CD8-positive, alpha-beta T cell (primary cell): ENCODE measurements at regions of chr11 and their contacts with region 1.

Region 1: GRCh38 chr11:17077520-17078401 is at the start of gene RPS13:
- DNase-seq: peak; percentile 88 to 99 (median 95)
- ATAC-seq: peak; percentile 94
- H3K4me3 ChIP-seq: peak within 1 kb of the TSS; percentile 86 to 95
- H3K4me3 Mint-ChIP-seq: peak within 1 kb of the TSS; percentile 99
- H3K27ac ChIP-seq: peak within 1 kb of the TSS; percentile 92 to 96
- H3K27ac Mint-ChIP-seq: peak within 1 kb of the TSS; percentile 99
- H3K4me1 ChIP-seq: peaks cover 25% of the 10 kb centered on the region
- H3K4me1 Mint-ChIP-seq: peaks cover 48% of the 10 kb centered on the region
- H3K27me3 ChIP-seq: no peaks in the 10 kb centered on the region
- H3K27me3 Mint-ChIP-seq: no peaks in the 10 kb centered on the region
- CTCF ChIP-seq: no peak
- total RNA-seq, gene RPS13: 2,112 to 2,169 TPM

Region 2: GRCh38 chr11:16738193-16738946 is 339.4 kb before region 1 on chr11 and contains the start of gene C11orf58:
- CTCF ChIA-PET with region 1: no interaction called
- POLR2A ChIA-PET with region 1: interaction called, 11 read pairs
- intact Hi-C with region 1: loop called (anchors 1 kb)
- DNase-seq: peak; percentile 85 to 98 (median 96)
- ATAC-seq: peak; percentile 95
- H3K4me3 ChIP-seq: peak within 1 kb of the TSS; percentile 93 to 95
- H3K4me3 Mint-ChIP-seq: peak within 1 kb of the TSS; percentile 63
- H3K27ac ChIP-seq: peak within 1 kb of the TSS; percentile 99 to 100
- H3K27ac Mint-ChIP-seq: no peak within 1 kb of the TSS
- H3K4me1 ChIP-seq: peaks cover 35% of the 10 kb centered on the region
- H3K4me1 Mint-ChIP-seq: peaks cover 25% of the 10 kb centered on the region
- H3K27me3 ChIP-seq: no peaks in the 10 kb centered on the region
- H3K27me3 Mint-ChIP-seq: no peaks in the 10 kb centered on the region
- CTCF ChIP-seq: no peak
- total RNA-seq, gene C11orf58: 148 to 157 TPM

Region 3: GRCh38 chr11:16945671-16946469 is 131.9 kb before region 1 on chr11:
- CTCF ChIA-PET with region 1: no interaction called
- POLR2A ChIA-PET with region 1: no interaction called
- intact Hi-C with region 1: loop called in 1 of 2 experiments (anchors 10 kb)
- DNase-seq: peak in 4 of 9 experiments; percentile 4 to 55 (median 30)
- ATAC-seq: no peak
- H3K4me3 ChIP-seq: no peak overlapping the region
- H3K4me3 Mint-ChIP-seq: no peak overlapping the region
- H3K27ac ChIP-seq: no peak overlapping the region
- H3K27ac Mint-ChIP-seq: no peak overlapping the region
- H3K4me1 ChIP-seq: no peaks in the 10 kb centered on the region
- H3K4me1 Mint-ChIP-seq: no peaks in the 10 kb centered on the region
- H3K27me3 ChIP-seq: no peaks in the 10 kb centered on the region
- H3K27me3 Mint-ChIP-seq: no peaks in the 10 kb centered on the region
- CTCF ChIP-seq: no peak

Region 4: DNA sequence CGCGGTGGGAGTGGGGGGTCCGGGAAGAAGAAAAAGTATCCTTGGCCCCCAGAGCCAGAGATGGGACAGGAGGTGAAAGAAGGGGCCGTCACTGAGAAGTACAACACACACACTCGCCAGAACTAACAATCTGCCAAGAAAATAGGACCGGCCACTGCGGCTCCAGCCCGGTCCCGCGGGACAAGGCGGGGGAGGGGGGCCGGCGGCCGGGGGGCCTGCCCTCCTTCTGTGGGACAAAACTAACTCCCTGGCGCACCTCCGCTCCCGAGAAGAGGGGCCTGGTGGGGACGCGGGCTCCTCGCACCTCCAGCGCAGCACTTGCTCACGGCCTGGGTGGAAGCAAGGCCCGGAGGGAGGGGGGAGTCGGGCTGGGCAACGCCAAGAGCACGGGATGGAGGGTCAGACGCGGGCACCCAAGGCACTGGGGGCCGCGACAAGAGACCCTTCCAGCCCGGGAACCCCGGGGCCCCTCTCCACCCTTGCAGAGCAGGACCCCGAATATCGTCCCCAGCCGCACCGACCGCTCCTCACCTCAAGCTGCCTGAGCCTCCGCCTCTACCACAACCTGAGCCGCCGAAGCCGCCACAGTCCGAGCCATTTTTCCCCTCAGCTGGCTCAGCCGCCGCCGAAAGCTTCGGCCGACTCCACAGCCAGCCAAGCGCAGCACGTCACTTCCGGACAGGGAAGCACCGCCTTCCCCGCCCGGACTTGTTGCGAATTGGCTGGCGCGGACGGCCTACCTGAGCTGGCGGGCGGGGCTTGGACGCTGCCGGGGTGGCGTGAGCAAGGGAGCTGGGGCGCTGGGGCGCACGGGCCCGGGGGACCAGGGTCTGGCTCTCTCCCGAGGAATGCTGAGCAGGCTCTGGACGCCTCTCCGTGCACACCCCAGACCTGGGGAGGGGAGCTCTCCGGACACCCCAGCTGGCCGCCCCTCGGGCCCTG is 129.8 kb after region 1 on chr11 and contains the start of gene PIK3C2A:
- CTCF ChIA-PET with region 1: no interaction called
- POLR2A ChIA-PET with region 1: interaction called, 9 read pairs
- intact Hi-C with region 1: loop called (anchors 1 to 2 kb)
- DNase-seq: peak; percentile 87 to 96 (median 94)
- ATAC-seq: peak; percentile 96
- H3K4me3 ChIP-seq: peak within 1 kb of the TSS; percentile 80 to 86
- H3K4me3 Mint-ChIP-seq: peak within 1 kb of the TSS; percentile 99
- H3K27ac ChIP-seq: peak within 1 kb of the TSS; percentile 76 to 88
- H3K27ac Mint-ChIP-seq: peak within 1 kb of the TSS; percentile 99
- H3K4me1 ChIP-seq: peaks cover 26% of the 10 kb centered on the region
- H3K4me1 Mint-ChIP-seq: peaks cover 47% of the 10 kb centered on the region
- H3K27me3 ChIP-seq: no peaks in the 10 kb centered on the region
- H3K27me3 Mint-ChIP-seq: no peaks in the 10 kb centered on the region
- CTCF ChIP-seq: no peak
- total RNA-seq, gene PIK3C2A: 50.8 to 54.3 TPM

Region 5: DNA sequence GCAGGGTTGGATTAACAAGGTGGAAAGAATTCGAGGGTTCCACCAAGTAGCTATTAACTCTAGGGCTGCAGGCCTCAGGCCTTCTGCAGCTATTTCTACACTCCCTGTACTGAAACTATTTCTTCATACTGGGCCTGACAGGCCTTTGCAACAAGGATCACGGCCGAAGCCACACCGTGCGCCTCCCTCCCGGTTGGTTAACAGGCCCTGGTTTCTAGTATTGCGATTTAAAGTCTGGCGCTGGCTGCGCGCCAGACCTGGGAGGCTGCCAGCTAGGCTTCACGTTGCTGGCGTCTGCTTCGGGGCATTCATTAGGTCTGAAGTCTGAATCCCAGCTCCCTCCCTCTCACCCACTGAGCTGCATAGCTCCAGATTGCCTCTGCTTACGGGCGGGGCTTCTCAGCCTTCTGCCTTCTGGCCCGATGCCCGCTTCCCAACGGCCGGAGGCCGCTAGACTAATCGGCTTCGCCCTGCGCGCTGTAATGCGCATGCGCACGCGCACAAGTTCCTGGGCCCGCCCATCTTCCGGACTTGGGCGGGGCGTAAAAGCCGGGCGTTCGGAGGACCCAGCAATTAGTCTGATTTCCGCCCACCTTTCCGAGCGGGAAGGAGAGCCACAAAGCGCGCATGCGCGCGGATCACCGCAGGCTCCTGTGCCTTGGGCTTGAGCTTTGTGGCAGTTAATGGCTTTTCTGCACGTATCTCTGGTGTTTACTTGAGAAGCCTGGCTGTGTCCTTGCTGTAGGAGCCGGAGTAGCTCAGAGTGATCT is 1318.2 kb after region 1 on chr11:
- CTCF ChIA-PET with region 1: no interaction called
- POLR2A ChIA-PET with region 1: no interaction called
- intact Hi-C with region 1: loop called in 1 of 2 experiments (anchors 10 kb)
- DNase-seq: peak; percentile 89 to 98 (median 92)
- ATAC-seq: peak; percentile 54
- H3K4me3 ChIP-seq: peak overlapping the region; percentile 86 to 98
- H3K4me3 Mint-ChIP-seq: peak overlapping the region; percentile 97
- H3K27ac ChIP-seq: peak overlapping the region; percentile 90
- H3K27ac Mint-ChIP-seq: peak overlapping the region; percentile 96
- H3K4me1 ChIP-seq: peaks cover 22% of the 10 kb centered on the region
- H3K4me1 Mint-ChIP-seq: peaks cover 35% of the 10 kb centered on the region
- H3K27me3 ChIP-seq: no peaks in the 10 kb centered on the region
- H3K27me3 Mint-ChIP-seq: no peaks in the 10 kb centered on the region
- CTCF ChIP-seq: no peak